ENCODE measurements at regions of chr1 and their contacts with region 1.

Region 1: GRCh38 chr1:2044510-2045319 is 5.5 kb upstream of the PRKCZ start:
- DNase-seq: peak; percentile 71
- H3K4me3 Mint-ChIP-seq: no peak overlapping the region
- H3K27ac Mint-ChIP-seq: no peak overlapping the region
- H3K4me1 Mint-ChIP-seq: peaks cover 17% of the 10 kb centered on the region
- H3K27me3 Mint-ChIP-seq: peaks cover 18% of the 10 kb centered on the region

Region 2: DNA sequence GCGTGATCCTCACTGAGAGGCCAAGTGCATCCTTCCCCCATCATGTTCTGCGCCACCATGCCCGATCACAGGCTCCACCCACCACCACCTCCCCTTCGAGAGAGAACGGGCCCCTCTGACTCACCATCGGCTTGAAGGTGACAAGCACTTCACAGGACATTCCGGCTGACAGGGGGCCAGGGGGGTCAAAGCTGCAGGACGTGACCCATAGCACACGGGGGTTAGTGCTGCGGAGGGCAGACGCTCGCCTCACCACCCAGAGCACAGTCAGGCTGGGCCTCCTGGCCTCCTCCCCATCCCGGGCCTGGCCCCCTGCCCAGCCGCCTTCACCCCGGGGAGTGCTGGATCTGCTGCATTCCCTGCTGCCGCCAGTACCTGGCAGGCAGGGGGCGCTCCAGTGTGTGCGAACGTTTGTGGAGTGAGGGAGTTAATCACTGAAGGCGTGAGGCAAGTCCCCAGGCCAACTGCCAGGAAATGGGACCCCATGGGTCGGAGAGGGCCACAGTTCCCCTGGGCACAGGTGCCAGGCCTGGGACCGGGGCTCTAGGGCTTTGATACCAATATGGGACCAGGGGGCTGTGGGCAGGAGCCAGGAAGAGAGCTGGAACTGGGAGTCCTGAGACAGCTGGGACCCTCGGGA is 84.8 kb before region 1 on chr1:
- CTCF ChIA-PET with region 1: interaction called, 20 read pairs
- POLR2A ChIA-PET with region 1: no interaction called
- DNase-seq: peak; percentile 78
- H3K4me3 Mint-ChIP-seq: no peak overlapping the region
- H3K27ac Mint-ChIP-seq: no peak overlapping the region
- H3K4me1 Mint-ChIP-seq: peaks cover under 1% of the 10 kb centered on the region
- H3K27me3 Mint-ChIP-seq: peaks cover 8% of the 10 kb centered on the region

Region 3: GRCh38 chr1:2031546-2032540 is 12.9 kb before region 1 on chr1:
- CTCF ChIA-PET with region 1: interaction called, 17 read pairs
- POLR2A ChIA-PET with region 1: no interaction called
- DNase-seq: no peak
- H3K4me3 Mint-ChIP-seq: no peak overlapping the region
- H3K27ac Mint-ChIP-seq: no peak overlapping the region
- H3K4me1 Mint-ChIP-seq: no peaks in the 10 kb centered on the region
- H3K27me3 Mint-ChIP-seq: no peaks in the 10 kb centered on the region

Measured in activated CD4-positive, alpha-beta T cell treated with anti-CD3 and anti-CD28 coated beads, Interleukin-2, amount 10 ng/mL, durations not matched to agents 7 days and 5 days (primary cell).